WTC11 (cell line): ENCODE measurements at regions of chr12 and their contacts with region 1.

Region 1: DNA sequence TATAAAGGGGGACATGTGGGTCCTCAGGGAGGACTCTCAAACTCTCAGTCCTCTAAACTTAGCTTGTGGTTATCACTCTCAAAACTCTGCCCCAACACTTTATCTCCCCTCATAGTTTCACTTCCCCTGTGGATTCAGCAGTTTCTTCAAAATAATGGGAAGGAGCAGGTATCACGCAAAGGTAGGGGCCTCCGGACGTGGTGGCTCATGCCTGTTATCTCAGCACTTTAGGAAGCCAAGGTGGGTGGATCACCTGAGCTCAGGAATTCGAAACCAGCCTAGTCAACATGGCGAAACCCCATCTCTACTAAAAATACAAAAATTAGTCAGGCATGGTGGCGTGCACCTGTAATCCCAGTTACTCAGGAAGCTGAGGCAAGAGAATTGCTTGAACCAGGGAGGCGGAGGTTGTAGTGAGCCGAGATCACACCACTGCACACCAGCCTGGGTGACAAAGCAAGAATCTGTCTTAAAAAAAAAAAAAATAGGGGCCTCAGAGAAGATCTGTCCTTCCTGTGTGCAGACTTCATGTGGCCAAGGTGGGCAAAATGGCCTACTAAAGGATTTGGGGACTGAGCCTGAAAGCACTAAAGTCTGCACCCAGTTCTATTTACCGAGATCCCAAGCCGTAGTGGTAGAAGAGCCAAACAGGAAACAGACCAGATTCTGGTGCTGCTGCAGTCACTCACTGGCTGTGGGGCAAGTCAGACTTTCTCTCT is 6.4 kb downstream of the ITGB7 start:
- DNase-seq: no peak
- ATAC-seq: no peak
- H3K4me3 Mint-ChIP-seq: no peak overlapping the region
- H3K27ac Mint-ChIP-seq: no peak overlapping the region
- H3K4me1 Mint-ChIP-seq: no peaks in the 10 kb centered on the region
- H3K27me3 Mint-ChIP-seq: peaks cover 54% of the 10 kb centered on the region
- CTCF ChIP-seq: no peak

Region 2: GRCh38 chr12:53065975-53066931 is 134.4 kb before region 1 on chr12:
- CTCF ChIA-PET with region 1: interaction called, 105 read pairs
- POLR2A ChIA-PET with region 1: no interaction called
- DNase-seq: peak; percentile 87
- ATAC-seq: peak; percentile 73
- H3K4me3 Mint-ChIP-seq: no peak overlapping the region
- H3K27ac Mint-ChIP-seq: no peak overlapping the region
- H3K4me1 Mint-ChIP-seq: peaks cover 23% of the 10 kb centered on the region
- H3K27me3 Mint-ChIP-seq: peaks cover 21% of the 10 kb centered on the region
- CTCF ChIP-seq: peak; percentile 96

Region 3: GRCh38 chr12:53098982-53099651 is 101.5 kb before region 1 on chr12:
- CTCF ChIA-PET with region 1: interaction called, 26 read pairs
- POLR2A ChIA-PET with region 1: no interaction called
- DNase-seq: peak; percentile 92
- ATAC-seq: peak; percentile 16
- H3K4me3 Mint-ChIP-seq: peak overlapping the region; percentile 90
- H3K27ac Mint-ChIP-seq: no peak overlapping the region
- H3K4me1 Mint-ChIP-seq: peaks cover 30% of the 10 kb centered on the region
- H3K27me3 Mint-ChIP-seq: peaks cover 54% of the 10 kb centered on the region
- CTCF ChIP-seq: peak; percentile 96

Region 4: DNA sequence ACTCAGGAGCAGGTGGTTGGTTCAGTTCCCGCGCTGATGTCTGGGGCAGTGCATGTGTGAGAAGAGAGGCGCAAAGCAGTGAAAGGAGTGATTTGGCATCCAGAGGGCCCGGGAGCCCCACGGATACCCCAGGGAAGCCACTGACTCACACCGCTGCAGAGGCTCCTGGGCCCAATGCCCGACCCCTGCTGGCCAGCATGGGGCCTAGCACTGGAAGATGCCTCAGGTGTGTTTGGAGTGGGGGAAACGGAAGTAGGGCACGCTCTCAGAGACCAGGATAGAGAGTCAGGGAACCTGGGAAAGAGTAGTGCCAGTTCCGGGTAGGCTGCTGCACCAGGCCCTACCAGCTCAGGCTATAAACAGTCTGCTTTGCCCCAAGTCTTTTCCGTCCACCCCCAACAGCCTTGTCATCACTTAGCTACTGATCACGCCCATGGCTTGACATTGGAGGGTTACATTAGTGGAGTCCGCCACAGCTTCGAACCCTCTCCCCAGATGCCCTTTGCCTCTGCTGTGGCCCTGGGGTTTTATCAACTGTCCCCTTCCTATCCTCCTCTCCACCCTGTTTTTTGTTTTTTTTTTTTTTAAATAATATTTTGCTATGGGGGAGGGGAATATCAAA is 10.4 kb before region 1 on chr12:
- CTCF ChIA-PET with region 1: interaction called, 38 read pairs
- POLR2A ChIA-PET with region 1: interaction called, 3 read pairs
- DNase-seq: peak; percentile 78
- ATAC-seq: peak; percentile 97
- H3K4me3 Mint-ChIP-seq: no peak overlapping the region
- H3K27ac Mint-ChIP-seq: no peak overlapping the region
- H3K4me1 Mint-ChIP-seq: peaks cover 16% of the 10 kb centered on the region
- H3K27me3 Mint-ChIP-seq: peaks cover 35% of the 10 kb centered on the region
- CTCF ChIP-seq: peak; percentile 53; the same call in 1 of the 2 replicates

Region 5: DNA sequence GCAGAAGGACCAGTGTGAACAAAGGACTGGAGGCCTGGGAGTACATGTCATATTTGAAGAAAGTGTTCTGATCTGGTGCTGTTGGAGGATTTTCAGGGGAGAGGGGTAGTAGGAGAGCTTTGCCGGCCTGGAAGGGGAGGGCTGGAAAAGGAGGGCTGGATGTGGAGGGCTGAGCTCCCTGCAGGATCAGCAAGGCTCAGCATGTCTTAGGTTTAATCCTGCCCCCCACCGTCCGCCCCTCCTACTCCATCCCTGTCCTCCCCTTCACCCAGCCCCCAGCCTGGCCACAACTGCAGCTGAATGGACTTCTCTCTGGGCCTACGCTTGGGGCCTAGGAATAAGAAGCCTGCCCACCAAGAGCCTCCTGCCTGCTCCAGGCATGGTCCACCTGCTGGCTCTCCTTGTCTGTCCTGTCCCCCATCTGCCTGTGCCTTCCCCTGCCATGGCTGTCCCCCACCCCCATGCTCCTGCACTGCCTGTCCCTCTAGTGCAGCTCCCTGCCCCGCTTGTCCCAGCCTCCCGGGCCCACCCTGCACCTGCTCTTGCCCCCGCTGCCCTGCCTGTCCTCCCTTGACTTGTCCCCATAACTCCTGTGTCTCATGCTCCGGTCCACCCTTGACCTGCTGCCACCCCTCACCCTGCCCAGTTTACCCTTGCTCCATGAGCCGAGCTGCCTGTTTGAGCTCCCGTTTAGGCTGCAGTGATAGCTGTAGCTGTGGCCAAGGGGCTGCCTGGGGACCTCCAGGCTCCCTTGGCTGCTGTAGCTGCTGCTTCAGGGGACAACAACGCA is 41.2 kb after region 1 on chr12:
- CTCF ChIA-PET with region 1: interaction called, 27 read pairs
- POLR2A ChIA-PET with region 1: no interaction called
- DNase-seq: peak; percentile 66
- ATAC-seq: peak; percentile 75
- H3K4me3 Mint-ChIP-seq: 0 out of 2 replicates have a peak overlapping the region, but pooled peaks have one; percentile 6
- H3K27ac Mint-ChIP-seq: peak overlapping the region; percentile 18; the same call in 1 of the 2 replicates
- H3K4me1 Mint-ChIP-seq: peaks cover 45% of the 10 kb centered on the region
- H3K27me3 Mint-ChIP-seq: peaks cover 2% of the 10 kb centered on the region; the same call in 1 of the 2 replicates
- CTCF ChIP-seq: no peak

Region 6: GRCh38 chr12:53365245-53365904 is 164.8 kb after region 1 on chr12:
- CTCF ChIA-PET with region 1: no interaction called
- POLR2A ChIA-PET with region 1: no interaction called
- DNase-seq: no peak
- ATAC-seq: no peak
- H3K4me3 Mint-ChIP-seq: no peak overlapping the region
- H3K27ac Mint-ChIP-seq: no peak overlapping the region
- H3K4me1 Mint-ChIP-seq: peaks cover 2% of the 10 kb centered on the region; the same call in 1 of the 2 replicates
- H3K27me3 Mint-ChIP-seq: no peaks in the 10 kb centered on the region
- CTCF ChIP-seq: no peak